Right ventricle myocardium inferior (tissue), 1 donor: ENCODE measurements at regions of chr4 and their contacts with region 1.

Region 1: GRCh38 chr4:106032851-106033286 is 137.6 kb downstream of the NPNT start:
- DNase-seq: no peak
- ATAC-seq: no peak

Region 2: DNA sequence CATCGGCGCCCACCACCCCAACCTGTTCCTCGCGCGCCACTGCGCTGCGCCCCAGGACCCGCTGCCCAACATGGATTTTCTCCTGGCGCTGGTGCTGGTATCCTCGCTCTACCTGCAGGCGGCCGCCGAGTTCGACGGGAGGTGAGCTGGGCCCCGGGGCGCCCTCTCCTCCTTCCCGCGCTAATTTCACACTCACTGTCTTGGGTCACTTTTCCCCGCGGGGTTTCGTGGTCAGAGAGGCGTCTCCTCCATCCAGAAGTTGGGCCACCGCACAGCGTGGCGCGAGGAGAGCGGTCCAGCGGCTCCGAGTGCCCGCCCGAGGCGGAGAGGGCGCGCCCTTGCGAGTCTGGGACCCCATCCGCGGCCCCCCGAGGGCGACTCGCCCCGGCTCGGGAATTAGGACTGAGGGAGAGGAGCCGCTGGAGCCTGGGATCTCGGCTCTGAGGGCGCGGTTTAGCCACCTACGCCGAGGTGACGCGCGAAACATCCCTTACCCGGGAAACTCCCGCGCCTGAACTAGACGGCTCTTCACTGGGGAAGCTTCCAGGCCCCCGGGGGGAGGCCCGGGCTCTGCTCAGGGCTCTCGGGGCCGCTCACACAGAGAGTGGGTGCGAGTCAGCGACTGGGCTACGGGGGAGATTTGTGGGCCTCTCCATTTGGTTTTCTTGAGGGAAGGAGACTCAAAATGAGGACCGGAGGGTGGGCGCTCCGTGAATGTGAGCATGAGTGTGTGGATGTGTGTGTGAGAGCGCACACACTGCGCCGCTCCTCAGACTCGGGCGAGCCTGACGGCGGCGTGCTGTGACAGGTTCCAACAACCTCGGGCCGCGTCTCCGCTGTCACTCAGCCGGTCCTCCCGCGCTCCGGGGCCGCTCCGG is 137.0 kb before region 1 on chr4:
- intact Hi-C with region 1: loop called (anchors 10 kb)
- DNase-seq: peak; percentile 62
- ATAC-seq: peak; percentile 34

Region 3: GRCh38 chr4:106095408-106095807 is 62.5 kb after region 1 on chr4:
- intact Hi-C with region 1: no loop called
- DNase-seq: no peak
- ATAC-seq: no peak

Region 4: DNA sequence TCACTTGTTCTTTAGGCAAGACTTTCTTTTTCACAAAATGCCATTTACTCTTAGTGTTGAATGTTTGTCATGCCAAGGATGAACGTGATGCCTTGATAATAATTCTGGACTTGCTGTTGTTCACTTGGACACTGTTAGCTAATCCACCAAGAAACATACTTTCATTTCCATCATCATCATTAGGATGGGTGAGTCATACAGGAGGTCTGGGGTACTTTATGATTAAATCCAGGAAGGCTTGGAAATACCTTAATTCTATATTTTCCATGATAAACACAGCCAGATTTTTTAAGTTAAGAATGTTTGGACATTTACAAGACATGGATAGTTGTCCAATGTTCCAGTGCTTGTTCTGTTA is 596.4 kb after region 1 on chr4:
- intact Hi-C with region 1: no loop called
- DNase-seq: no peak
- ATAC-seq: no peak